ENCODE measurements at regions of chr3 and their contacts with region 1.

Region 1: DNA sequence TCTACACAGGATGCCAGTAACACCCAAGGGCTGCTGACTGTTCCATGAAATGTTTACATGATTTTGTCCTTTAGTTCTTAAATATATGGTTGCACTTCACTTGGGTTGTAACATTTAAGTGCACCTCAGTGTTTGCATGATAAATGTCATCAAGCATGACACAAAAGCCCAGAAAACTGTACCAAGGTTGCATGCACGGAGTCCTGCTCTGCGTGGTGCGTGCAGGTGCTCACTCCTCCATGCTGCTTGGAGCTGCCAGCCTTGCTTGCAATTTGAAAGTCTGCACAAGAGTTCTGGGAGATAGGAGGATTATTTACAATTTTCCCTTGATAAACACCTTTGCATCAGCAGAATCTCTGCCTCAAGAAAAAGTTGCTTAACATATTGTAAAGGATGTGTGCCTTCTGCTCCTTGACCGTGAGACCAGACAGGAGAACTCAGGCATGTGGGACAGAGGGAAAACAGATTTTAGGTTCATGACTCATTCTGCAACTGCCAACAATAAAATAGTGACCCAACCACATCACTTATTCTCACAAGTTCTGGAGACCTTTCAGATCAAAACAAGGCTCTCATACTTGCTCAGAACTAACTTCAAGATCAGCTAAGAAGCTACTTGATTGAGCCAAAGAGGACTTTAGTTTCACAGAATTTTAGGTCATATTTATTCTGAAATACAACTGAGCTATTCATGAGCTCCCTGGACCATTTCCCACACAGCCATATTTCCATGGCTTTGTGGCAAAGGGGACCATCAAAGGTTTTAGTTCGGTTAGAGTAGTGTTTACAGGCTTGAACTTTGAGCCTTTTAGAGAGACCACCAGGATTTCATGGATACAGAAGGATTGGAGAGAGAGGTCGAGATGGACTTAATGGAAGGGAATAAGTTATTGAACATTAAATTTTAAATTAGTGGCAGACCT is 128.4 kb upstream of the ZBED2 start:
- DNase-seq: no peak
- ATAC-seq: no peak
- H3K4me3 ChIP-seq: no peak overlapping the region
- H3K4me3 Mint-ChIP-seq: no peak overlapping the region
- H3K27ac ChIP-seq: no peak overlapping the region
- H3K27ac Mint-ChIP-seq: no peak overlapping the region
- H3K4me1 ChIP-seq: no peaks in the 10 kb centered on the region
- H3K4me1 Mint-ChIP-seq: no peaks in the 10 kb centered on the region
- H3K27me3 ChIP-seq: no peaks in the 10 kb centered on the region
- H3K27me3 Mint-ChIP-seq: no peaks in the 10 kb centered on the region
- CTCF ChIP-seq: no peak

Region 2: GRCh38 chr3:111650378-111651275 is 72.9 kb before region 1 on chr3:
- CTCF ChIA-PET with region 1: no interaction called
- POLR2A ChIA-PET with region 1: no interaction called
- intact Hi-C with region 1: no loop called
- DNase-seq: no peak
- ATAC-seq: no peak
- H3K4me3 ChIP-seq: no peak overlapping the region
- H3K4me3 Mint-ChIP-seq: no peak overlapping the region
- H3K27ac ChIP-seq: no peak overlapping the region
- H3K27ac Mint-ChIP-seq: peak overlapping the region; percentile 18
- H3K4me1 ChIP-seq: no peaks in the 10 kb centered on the region
- H3K4me1 Mint-ChIP-seq: peaks cover 23% of the 10 kb centered on the region
- H3K27me3 ChIP-seq: no peaks in the 10 kb centered on the region
- H3K27me3 Mint-ChIP-seq: no peaks in the 10 kb centered on the region
- CTCF ChIP-seq: no peak

Region 3: GRCh38 chr3:111737706-111738086 is 14.1 kb after region 1 on chr3:
- CTCF ChIA-PET with region 1: no interaction called
- POLR2A ChIA-PET with region 1: no interaction called
- intact Hi-C with region 1: no loop called
- DNase-seq: no peak
- ATAC-seq: no peak
- H3K4me3 ChIP-seq: no peak overlapping the region
- H3K4me3 Mint-ChIP-seq: no peak overlapping the region
- H3K27ac ChIP-seq: no peak overlapping the region
- H3K27ac Mint-ChIP-seq: no peak overlapping the region
- H3K4me1 ChIP-seq: no peaks in the 10 kb centered on the region
- H3K4me1 Mint-ChIP-seq: no peaks in the 10 kb centered on the region
- H3K27me3 ChIP-seq: no peaks in the 10 kb centered on the region
- H3K27me3 Mint-ChIP-seq: no peaks in the 10 kb centered on the region
- CTCF ChIP-seq: no peak

Region 4: DNA sequence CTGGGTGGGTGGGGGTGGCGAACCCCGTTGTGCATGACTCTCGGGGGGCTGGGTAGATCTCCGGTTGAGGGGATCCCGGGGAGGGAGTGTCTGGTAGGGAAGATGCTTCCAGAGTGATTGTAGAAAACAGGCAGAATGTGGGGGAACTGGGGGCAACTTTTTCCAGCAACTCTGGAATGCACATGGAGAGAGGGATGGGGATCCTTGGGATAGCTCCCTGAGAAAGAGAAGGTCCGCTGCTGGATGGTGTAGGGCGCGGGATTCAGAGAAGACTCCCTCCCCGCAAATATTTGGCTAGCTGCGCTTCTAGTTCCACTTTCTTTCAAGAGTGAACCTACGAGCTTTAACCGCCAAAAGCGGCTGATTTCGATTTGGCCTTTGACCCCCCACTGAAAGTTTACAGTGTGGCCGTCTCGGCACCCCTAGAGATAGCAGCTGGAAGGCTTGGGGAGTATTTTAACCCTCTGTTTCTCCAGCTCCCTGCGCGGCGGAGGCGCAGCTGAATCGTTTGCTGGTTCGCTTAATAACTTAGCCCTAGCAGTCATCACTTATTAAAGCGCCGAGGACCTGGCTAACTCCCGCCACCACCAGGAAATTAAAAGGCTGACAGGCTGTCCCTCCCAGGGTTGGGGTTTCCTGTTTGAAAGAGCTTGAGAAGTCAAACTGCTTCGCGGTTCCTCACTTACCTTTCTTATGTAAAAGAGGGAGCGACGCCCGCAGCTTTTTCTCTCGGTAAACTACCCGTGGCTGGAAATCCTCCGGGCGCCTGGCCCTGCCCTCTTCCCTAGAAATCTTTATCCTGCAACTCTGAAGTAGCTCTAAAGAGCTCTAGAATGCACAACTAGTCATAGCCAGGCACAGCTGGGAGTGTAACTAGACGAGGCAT is 136.7 kb after region 1 on chr3:
- CTCF ChIA-PET with region 1: no interaction called
- POLR2A ChIA-PET with region 1: interaction called, 3 read pairs
- intact Hi-C with region 1: loop called in 1 of 2 experiments (anchors 10 kb)
- DNase-seq: peak; percentile 12 to 84 (median 34)
- ATAC-seq: peak; percentile 46
- H3K4me3 ChIP-seq: peak overlapping the region; percentile 81
- H3K4me3 Mint-ChIP-seq: peak overlapping the region; percentile 90
- H3K27ac ChIP-seq: peak overlapping the region; percentile 21 to 55
- H3K27ac Mint-ChIP-seq: peak overlapping the region; percentile 81
- H3K4me1 ChIP-seq: peaks cover 20% of the 10 kb centered on the region
- H3K4me1 Mint-ChIP-seq: peaks cover 24% of the 10 kb centered on the region
- H3K27me3 ChIP-seq: peaks cover 0 to 4% of the 10 kb centered on the region in 2 experiments
- H3K27me3 Mint-ChIP-seq: peaks cover 67% of the 10 kb centered on the region
- CTCF ChIP-seq: no peak

Region 5: DNA sequence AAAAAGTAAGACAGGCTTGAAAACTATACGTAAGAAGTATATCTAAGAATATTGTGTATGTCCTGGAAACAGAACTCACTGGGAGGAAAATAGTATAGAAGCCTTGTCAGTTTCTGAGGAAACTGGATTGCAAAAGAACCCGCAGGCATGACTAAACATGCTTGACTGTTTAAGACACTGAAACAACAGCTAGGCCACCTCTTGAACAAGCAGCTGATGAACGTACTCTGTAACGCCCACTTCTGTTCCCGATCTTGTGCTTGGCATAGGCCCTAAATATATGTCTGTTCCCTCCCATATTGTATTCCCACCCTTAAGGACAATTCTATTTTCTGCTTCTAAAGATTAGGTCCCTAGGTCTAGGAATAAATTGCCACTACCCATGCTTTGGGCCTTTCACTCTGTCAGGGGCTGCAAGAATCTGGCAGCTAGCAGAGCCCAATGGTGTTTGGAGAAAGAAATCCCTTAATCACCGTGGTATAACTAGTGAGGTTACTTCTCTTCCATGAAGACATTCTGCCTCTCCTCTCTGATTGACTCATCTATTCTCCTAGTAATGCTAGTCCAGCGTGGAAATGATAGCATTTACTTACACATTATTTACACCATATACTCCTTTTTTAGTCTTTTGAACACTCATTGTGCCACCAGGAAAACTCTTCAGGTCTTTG is 655.6 kb after region 1 on chr3:
- CTCF ChIA-PET with region 1: no interaction called
- POLR2A ChIA-PET with region 1: no interaction called
- intact Hi-C with region 1: no loop called
- DNase-seq: peak in 2 of 14 experiments; percentile 35 to 46
- ATAC-seq: no peak
- H3K4me3 ChIP-seq: no peak overlapping the region
- H3K4me3 Mint-ChIP-seq: no peak overlapping the region
- H3K27ac ChIP-seq: no peak overlapping the region
- H3K27ac Mint-ChIP-seq: no peak overlapping the region
- H3K4me1 ChIP-seq: no peaks in the 10 kb centered on the region
- H3K4me1 Mint-ChIP-seq: peaks cover 10% of the 10 kb centered on the region
- H3K27me3 ChIP-seq: no peaks in the 10 kb centered on the region
- H3K27me3 Mint-ChIP-seq: no peaks in the 10 kb centered on the region
- CTCF ChIP-seq: no peak

Measured in CD4-positive, alpha-beta T cell (primary cell).